Esophagus muscularis mucosa (tissue), 4 donors: ENCODE measurements at regions of chr3 and their contacts with region 1.

Region 1: DNA sequence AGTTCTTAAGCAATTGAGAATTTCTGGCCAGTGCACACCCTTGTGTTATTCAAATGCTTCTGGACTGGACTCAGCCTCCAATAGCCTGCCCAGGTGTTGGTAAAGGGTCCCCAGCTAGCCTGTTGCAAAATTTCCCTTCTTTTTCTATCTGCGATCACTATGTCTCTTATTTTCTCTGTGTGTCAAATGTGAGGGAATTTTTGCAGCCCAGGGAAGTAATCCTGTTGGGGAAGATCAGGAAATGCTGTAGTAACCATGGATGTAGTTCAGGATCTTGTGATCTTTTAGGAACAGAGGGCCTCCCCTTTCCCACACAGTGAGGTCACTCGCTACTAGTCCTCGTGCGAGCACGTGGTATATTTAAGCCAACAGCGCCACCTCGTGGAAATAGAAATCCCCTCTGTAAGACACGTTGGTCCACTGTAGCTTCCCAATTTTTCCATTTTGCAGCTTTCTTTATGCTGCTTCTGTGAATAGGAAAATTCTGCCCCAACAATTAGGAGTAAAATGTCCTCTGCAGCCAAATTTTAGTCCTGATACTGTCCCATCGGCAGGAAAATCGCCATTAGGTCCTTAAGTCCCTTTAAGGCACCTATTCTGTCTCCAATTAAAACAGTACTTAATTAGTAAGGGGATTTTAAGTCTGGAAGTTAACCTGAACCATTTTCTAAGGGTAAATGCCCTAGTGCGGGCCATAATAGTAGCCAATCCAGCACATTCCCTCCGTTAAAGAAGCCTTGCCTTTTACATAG is 4.0 kb upstream of the SMCO1 start:
- DNase-seq: no peak
- H3K4me3 ChIP-seq: no peak overlapping the region
- H3K27ac ChIP-seq: no peak overlapping the region
- H3K4me1 ChIP-seq: peaks cover 0 to 5% (median 0%) of the 10 kb centered on the region in 4 donors
- H3K27me3 ChIP-seq: no peaks in the 10 kb centered on the region
- CTCF ChIP-seq: peak; percentile 63 to 71 (median 68)
- EP300 ChIP-seq: no peak
- POLR2A ChIP-seq: no peak

Region 2: GRCh38 chr3:196251918-196252317 is 267.2 kb before region 1 on chr3:
- intact Hi-C with region 1: loop called (anchors 2 kb)
- DNase-seq: no peak
- H3K4me3 ChIP-seq: no peak overlapping the region
- H3K27ac ChIP-seq: no peak overlapping the region
- H3K4me1 ChIP-seq: no peaks in the 10 kb centered on the region
- H3K27me3 ChIP-seq: no peaks in the 10 kb centered on the region
- CTCF ChIP-seq: no peak
- EP300 ChIP-seq: no peak
- POLR2A ChIP-seq: no peak